Right ventricle myocardium superior (tissue), 1 donor: ENCODE measurements at regions of chr1 and their contacts with region 1.

Region 1: DNA sequence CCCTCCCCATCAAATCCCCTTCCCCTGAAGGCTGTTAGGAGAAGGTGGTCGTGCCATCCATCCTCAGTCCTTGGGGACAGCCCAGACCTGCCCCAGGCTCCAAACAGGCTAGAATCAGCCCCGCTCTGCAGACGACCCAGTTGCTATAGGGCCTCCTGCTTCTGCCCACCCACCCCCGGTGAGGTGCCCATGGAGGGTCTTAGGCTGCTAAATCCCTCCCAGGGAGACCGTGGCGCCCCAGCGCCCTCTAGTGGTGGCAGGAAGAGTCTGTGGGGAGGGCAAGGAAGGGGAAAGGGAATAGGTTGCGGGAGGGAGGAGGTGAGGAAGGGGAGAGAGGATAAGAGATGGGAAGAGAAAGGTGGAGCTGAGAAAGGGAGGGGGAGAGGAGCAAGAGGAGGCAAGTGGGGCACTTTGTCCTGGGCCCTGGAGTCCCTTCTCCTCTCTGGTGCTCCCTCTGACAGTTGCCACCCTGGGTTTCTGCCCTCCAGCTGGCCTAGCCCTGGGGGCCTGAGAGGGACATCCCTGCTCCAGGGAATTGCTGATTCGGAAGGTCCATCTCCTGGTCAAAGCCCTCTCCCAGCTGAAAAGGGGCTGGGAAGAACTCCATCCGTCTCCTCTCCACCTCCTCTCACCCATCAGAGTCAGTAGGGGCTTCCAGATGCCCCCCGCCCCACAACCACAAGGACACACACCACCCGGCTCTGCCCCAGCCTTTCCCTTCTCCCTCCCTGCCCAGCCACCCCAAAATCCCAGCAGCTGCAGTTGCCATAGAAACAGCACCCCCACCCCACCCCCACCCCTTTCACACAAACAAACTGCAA is 55.4 kb downstream of the CAMK2N1 start:
- DNase-seq: no peak
- ATAC-seq: peak; percentile 63

Region 2: DNA sequence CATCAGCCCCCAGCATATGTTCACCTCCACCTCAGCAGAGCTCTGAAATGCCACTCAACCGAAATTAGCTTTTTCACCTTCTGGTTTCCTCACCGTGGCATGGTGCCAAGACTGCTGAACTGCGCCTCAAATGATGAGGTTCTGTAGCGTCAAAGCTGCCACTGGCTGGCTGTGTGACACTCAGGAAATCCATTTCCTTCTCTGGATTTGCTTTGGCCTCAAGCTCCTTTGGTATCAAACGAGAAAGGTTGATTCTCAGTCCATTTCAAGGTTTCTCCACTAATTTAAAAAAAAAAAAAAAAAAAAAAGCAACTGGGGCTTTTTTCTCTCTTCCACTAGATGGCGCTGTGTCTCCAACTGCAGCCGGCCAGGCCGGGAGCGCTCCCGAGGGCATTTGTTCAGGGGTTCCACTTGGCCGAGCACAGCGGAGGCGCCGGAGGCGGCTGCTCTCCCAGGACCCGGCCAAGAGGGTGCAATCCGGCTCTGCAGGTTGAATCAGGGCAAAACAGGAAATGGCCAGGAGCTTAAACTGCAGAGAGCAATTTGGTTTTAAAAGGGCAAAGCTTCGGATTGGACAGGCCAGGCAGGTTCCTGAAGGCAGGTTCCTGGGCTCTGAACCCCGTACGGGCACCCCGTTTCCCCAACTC is 217.8 kb before region 1 on chr1:
- intact Hi-C with region 1: loop called (anchors 5 kb)
- DNase-seq: peak; percentile 81
- ATAC-seq: peak; percentile 85

Region 3: DNA sequence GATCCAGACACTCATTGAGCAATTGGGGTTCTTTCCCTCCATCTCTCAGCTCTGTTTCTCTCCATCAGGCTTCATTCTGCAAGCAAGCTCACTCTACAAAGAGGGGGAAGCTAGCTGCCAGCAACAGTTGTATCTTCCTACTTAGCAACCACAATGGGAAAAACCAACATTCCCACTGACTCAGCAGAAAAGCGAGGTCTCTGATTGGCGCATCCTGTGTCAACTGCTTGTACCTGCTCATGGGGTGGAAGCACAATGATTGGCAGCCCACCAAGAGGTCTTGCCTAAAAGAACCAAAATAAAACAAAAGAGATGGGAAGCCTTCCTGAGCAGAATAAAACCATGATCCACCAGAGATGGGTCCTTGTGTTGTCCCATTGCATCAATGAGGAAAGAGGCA is 154.3 kb after region 1 on chr1:
- intact Hi-C with region 1: no loop called
- DNase-seq: no peak
- ATAC-seq: no peak

Region 4: GRCh38 chr1:20625176-20626097 is 194.9 kb after region 1 on chr1:
- intact Hi-C with region 1: no loop called
- DNase-seq: no peak
- ATAC-seq: no peak